Posterior vena cava (tissue), 2 donors: ENCODE measurements at regions of chr18 and their contacts with region 1.

Region 1: DNA sequence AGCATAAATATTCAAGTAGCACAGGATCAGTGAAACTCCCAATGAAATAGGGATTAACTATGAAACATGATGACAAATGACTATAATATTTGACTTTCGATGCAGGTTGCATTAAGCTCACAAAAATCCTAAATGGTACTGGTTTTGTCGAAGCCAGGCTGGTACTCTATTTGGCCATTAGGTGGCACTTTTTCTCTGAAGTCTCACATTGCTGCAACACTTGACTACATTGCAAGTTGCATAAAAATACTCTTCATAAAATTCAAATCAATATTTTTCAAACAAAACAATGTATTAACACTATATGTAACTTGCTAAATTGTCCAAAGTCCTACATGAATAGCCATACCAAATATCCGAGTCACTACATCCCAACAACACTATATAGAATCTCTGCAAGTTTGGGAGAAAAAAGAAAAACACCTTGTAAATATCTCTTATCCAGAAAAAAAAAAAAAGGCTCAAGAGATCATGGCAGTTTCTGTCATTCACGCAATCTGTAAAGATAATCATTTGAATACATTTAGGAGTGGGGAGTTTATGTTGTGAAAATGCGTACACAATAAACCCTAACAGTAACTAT is 9.5 kb downstream of the RTTN start:
- DNase-seq: no peak

Region 2: GRCh38 chr18:70234663-70235459 is 38.9 kb after region 1 on chr18:
- intact Hi-C with region 1: no loop called
- DNase-seq: no peak

Region 3: GRCh38 chr18:70431203-70431624 is 235.3 kb after region 1 on chr18:
- intact Hi-C with region 1: loop called (anchors 5 kb)
- DNase-seq: no peak

Region 4: DNA sequence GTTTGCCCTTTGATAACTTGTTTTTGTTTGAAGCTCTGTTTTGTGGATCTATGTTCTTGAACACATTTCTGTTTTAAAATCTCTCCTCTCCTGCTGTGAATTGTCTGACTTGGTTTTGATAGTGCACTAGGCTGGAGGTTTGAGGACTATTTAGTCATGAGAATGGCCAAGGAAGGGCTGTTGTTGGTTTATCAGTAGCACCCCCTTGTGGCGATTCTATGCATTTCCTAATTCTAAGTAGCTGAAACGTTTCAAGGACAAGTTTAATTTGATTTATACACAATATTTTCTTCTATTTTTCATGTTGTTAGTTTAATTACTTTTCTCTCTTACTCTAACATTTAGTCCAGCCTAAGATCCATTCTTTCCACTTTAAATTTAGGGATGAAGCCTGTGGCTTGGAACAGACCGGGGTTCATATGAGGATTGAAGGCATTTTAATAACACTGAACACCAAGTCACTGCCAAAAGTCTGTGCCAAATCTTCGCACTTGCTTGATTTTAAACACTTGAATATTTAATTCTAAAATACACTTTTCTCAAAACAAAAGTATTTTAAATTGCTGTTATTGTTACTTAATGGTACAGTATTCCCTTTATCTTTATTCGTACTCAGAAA is 258.9 kb after region 1 on chr18:
- intact Hi-C with region 1: loop called in 1 of 2 experiments (anchors 5 kb)
- DNase-seq: no peak